Activated CD4-positive, alpha-beta memory T cell treated with anti-CD3 and anti-CD28 coated beads, Interleukin-2, amount 10 ng/mL, durations not matched to agents 7 days and 5 days (primary cell): ENCODE measurements at regions of chr1 and their contacts with region 1.

Region 1: GRCh38 chr1:27671964-27672749 is at the start of gene IFI6:
- DNase-seq: peak; percentile 86
- H3K4me3 Mint-ChIP-seq: peak within 1 kb of the TSS; percentile 94
- H3K27ac Mint-ChIP-seq: peak within 1 kb of the TSS; percentile 94
- H3K4me1 Mint-ChIP-seq: peaks cover 42% of the 10 kb centered on the region
- H3K27me3 Mint-ChIP-seq: no peaks in the 10 kb centered on the region
- total RNA-seq, gene IFI6: 577 to 593 TPM

Region 2: GRCh38 chr1:27430903-27431600 is 241.1 kb before region 1 on chr1:
- CTCF ChIA-PET with region 1: interaction called, 10 read pairs
- POLR2A ChIA-PET with region 1: no interaction called
- DNase-seq: peak; percentile 35
- H3K4me3 Mint-ChIP-seq: peak overlapping the region; percentile 43
- H3K27ac Mint-ChIP-seq: peak overlapping the region; percentile 70
- H3K4me1 Mint-ChIP-seq: peaks cover 69% of the 10 kb centered on the region
- H3K27me3 Mint-ChIP-seq: no peaks in the 10 kb centered on the region

Region 3: GRCh38 chr1:27583479-27583878 is 88.7 kb before region 1 on chr1:
- CTCF ChIA-PET with region 1: no interaction called
- POLR2A ChIA-PET with region 1: no interaction called
- DNase-seq: no peak
- H3K4me3 Mint-ChIP-seq: no peak overlapping the region
- H3K27ac Mint-ChIP-seq: no peak overlapping the region
- H3K4me1 Mint-ChIP-seq: peaks cover 7% of the 10 kb centered on the region
- H3K27me3 Mint-ChIP-seq: no peaks in the 10 kb centered on the region

Region 4: DNA sequence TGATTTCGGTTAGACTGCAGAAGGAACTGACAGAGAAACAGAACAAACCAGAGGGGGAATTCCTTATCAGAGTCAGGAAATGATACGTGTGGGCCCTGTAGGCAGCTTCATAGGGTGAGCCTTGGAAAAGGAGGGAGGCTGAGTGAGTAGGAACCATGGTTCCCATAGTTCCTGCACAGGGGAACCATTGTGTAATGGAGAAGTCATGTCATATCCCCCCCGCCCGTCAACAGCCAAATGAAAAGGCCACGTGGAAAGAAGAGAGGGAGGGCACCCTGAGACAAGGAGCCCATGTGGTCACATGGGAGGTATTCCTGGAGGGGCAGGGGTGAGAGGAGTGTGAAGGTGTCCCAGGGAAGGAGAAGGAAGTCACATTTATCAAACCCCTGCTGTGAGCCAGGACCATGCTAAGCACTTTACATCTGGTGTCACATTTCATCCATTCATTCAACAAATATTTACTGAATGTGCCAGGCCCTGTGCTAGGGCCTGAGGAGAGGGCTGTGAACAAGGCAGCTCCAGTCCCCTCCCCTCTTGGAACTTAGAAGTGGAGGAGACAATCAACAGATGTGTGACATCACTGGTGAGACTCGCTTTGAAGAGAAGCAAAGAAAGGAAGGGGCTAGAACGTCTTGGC is 21.5 kb before region 1 on chr1:
- CTCF ChIA-PET with region 1: interaction called, 10 read pairs
- POLR2A ChIA-PET with region 1: interaction called, 3 read pairs
- DNase-seq: no peak
- H3K4me3 Mint-ChIP-seq: no peak overlapping the region
- H3K27ac Mint-ChIP-seq: no peak overlapping the region
- H3K4me1 Mint-ChIP-seq: peaks cover 9% of the 10 kb centered on the region
- H3K27me3 Mint-ChIP-seq: no peaks in the 10 kb centered on the region

Region 5: DNA sequence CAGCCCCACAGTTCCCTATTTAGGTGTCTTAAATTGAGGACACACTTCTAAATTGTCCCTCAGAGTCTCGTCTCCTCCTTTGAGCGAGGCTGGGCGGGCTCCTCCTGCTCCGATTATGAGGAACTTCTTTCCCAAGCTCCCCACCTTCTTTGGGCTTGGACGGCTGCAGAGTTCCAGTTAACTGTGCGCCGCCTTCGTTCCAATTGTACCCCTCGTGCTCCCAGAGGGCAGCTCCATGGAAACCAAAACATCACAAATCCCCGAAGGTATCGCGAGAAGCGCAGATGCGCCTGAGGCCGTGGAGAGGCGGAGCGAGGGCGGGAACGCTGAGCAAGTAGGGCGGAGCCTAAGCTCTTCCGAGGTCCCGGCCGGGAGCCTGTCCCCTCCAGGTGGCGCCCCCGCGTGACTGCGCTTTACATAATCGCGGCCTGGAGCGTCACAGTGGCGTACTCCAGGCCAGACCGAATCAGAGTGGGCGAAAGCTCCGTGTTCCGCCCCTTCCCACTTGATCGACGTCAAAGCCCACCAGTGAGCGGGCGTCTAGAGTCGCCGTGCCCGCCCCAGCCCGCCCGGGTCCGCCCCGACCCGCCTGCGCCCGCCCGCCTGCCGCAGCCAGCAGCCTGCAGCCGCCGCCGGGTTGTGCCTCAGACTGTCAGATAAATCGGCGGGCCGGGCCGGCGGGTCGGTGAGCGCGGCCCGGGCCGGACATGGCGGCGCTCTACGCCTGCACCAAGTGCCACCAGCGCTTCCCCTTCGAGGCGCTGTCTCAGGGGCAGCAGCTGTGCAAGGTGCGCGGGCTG is 53.4 kb after region 1 on chr1 and contains the start of gene FAM76A:
- CTCF ChIA-PET with region 1: interaction called, 27 read pairs
- POLR2A ChIA-PET with region 1: interaction called, 19 read pairs
- DNase-seq: peak; percentile 100
- H3K4me3 Mint-ChIP-seq: peak within 1 kb of the TSS; percentile 79
- H3K27ac Mint-ChIP-seq: peak within 1 kb of the TSS; percentile 73
- H3K4me1 Mint-ChIP-seq: peaks cover 24% of the 10 kb centered on the region
- H3K27me3 Mint-ChIP-seq: peaks cover 3% of the 10 kb centered on the region
- total RNA-seq, gene FAM76A: 13.6 to 14.1 TPM

Region 6: DNA sequence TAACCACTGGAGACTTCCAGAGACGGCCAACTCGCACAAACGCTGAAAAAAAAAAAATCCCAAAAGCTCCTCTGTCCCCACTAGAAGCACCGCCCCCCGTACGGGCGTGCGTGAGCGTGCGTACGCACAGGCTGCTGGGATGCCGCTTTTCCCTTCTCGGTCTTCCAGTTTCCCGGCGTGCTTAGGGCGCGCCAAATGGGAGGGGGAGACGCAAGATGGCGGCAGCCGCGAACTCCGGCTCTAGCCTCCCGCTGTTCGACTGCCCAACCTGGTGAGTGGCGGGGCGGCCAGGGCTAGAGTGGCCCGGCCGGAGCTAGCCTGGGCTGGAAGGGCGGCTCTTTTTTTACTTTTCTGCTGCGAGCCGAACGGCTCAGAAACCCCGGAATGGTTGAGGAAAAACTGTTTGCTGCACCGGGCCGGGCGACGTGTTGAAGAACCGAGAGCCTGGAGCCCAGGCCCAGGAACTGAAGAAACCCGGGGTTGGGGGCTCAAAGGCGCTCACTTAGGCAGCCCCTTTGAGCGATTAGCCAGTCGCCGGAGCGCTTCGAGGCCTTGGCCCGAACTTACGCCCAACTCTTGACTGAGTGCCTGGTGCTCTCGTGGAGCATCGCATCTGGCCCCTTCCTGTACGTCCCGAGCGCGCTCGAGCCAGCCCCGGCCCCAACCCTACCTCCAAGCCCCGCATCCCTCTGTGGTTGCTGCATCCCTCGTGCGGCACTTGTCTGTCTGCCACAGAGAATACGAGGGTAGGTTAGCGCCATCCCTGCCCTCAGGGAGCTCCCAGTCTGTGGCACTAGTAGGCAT is 158.7 kb after region 1 on chr1 and contains the start of gene PPP1R8:
- CTCF ChIA-PET with region 1: interaction called, 14 read pairs
- POLR2A ChIA-PET with region 1: interaction called, 18 read pairs
- DNase-seq: peak; percentile 89
- H3K4me3 Mint-ChIP-seq: peak within 1 kb of the TSS; percentile 93
- H3K27ac Mint-ChIP-seq: peak within 1 kb of the TSS; percentile 83
- H3K4me1 Mint-ChIP-seq: peaks cover 37% of the 10 kb centered on the region
- H3K27me3 Mint-ChIP-seq: no peaks in the 10 kb centered on the region
- total RNA-seq, gene PPP1R8: 48.5 to 51.2 TPM